ENCODE measurements at regions of chr5 and their contacts with region 1.

Region 1: DNA sequence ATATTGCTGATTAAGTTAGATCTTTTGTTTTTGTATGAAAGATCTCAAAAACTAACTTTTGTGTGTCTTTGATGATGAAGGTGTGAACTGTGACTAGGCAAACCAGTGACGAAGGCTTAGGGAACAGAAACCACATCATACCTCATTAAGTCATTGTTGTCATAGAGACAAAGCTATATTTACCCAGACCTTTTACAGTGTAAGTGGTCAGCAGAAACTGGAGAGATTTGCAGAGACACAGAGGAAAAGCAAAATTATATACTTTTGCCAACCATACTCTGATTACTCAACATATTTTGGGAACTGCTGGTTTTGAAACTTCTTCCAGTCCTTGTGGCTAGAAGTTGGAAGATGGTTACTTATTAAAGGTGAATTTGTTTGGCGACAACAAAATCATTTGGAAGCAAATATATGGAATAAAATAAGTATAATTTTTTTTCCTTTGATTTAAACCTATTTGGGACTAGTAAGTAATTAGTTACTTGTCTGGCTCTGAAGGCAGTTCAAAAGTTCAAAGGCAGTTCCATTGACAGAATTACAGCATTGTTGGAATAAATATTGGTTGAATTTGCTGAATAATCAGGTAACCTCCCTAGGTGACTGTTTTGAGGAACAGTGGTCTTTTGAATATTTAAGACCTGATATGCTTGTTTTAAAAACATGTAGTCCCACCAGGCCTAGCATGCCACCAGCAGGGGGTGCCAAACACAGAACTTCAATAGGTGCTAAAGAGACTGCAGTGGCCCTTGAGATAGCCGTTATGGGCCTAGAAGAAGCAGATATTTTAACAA is 103.8 kb downstream of the RPS23 start:
- DNase-seq: peak in 1 of 2 donors; percentile 25
- ATAC-seq: peak in 1 of 2 donors; percentile 66
- H3K4me3 ChIP-seq: no peak overlapping the region
- H3K27ac ChIP-seq: no peak overlapping the region
- H3K4me1 ChIP-seq: no peaks in the 10 kb centered on the region
- H3K27me3 ChIP-seq: no peaks in the 10 kb centered on the region
- CTCF ChIP-seq: peak; percentile 10 to 54 (median 32)
- POLR2A ChIP-seq: no peak

Region 2: DNA sequence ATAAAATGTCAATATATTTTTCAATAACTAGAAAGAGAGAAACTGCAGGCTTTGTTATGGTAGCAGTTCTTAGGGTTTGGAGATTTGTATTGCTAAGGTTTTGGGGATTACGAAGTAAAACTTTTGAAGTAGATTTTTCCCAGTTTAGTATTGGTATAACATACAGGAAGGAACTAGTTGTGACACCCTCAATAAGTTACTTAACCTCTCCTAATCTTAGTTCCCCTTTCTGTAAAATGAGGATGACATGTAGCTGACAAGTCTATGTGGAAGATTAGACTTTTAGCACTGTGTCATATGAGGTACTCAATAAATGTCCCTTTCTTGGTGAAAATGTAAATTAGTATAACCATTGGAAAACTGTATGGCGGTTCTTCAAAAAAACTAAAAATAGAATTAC is 275.9 kb before region 1 on chr5:
- in situ Hi-C with region 1: no loop called
- intact Hi-C with region 1: no loop called
- DNase-seq: no peak
- ATAC-seq: no peak
- H3K4me3 ChIP-seq: no peak overlapping the region
- H3K27ac ChIP-seq: no peak overlapping the region
- H3K4me1 ChIP-seq: no peaks in the 10 kb centered on the region
- H3K27me3 ChIP-seq: no peaks in the 10 kb centered on the region
- CTCF ChIP-seq: no peak
- POLR2A ChIP-seq: no peak

Region 3: GRCh38 chr5:82107267-82107666 is 67.1 kb before region 1 on chr5:
- in situ Hi-C with region 1: loop called in 1 of 4 experiments (anchors 10 kb)
- intact Hi-C with region 1: no loop called
- DNase-seq: no peak
- ATAC-seq: peak; percentile 74 to 79
- H3K4me3 ChIP-seq: no peak overlapping the region
- H3K27ac ChIP-seq: no peak overlapping the region
- H3K4me1 ChIP-seq: peaks cover 7 to 18% of the 10 kb centered on the region in 2 donors
- H3K27me3 ChIP-seq: no peaks in the 10 kb centered on the region
- CTCF ChIP-seq: peak; percentile 38 to 56 (median 54)
- POLR2A ChIP-seq: no peak

Region 4: GRCh38 chr5:82225525-82226172 is 51.3 kb after region 1 on chr5:
- in situ Hi-C with region 1: no loop called
- intact Hi-C with region 1: loop called (anchors 1 kb)
- DNase-seq: peak; percentile 33 to 50
- ATAC-seq: peak; percentile 67 to 95
- H3K4me3 ChIP-seq: no peak overlapping the region
- H3K27ac ChIP-seq: no peak overlapping the region
- H3K4me1 ChIP-seq: no peaks in the 10 kb centered on the region
- H3K27me3 ChIP-seq: no peaks in the 10 kb centered on the region
- CTCF ChIP-seq: peak; percentile 70 to 86 (median 82)
- POLR2A ChIP-seq: no peak

Region 5: GRCh38 chr5:82278095-82278918 is 104.0 kb after region 1 on chr5 and contains the start of gene RPS23:
- in situ Hi-C with region 1: no loop called
- intact Hi-C with region 1: no loop called
- DNase-seq: peak; percentile 81 to 89
- ATAC-seq: peak; percentile 98
- H3K4me3 ChIP-seq: peak within 1 kb of the TSS; percentile 67 to 100 (median 87)
- H3K27ac ChIP-seq: peak within 1 kb of the TSS; percentile 79 to 90 (median 84)
- H3K4me1 ChIP-seq: peaks cover 9 to 40% of the 10 kb centered on the region in 2 donors
- H3K27me3 ChIP-seq: no peaks in the 10 kb centered on the region
- CTCF ChIP-seq: peak in 1 of 5 experiments; percentile 24
- POLR2A ChIP-seq: peak; percentile 70 to 77
- total RNA-seq, gene RPS23: 3,129 to 4,184 (median 3,721) TPM

Region 6: DNA sequence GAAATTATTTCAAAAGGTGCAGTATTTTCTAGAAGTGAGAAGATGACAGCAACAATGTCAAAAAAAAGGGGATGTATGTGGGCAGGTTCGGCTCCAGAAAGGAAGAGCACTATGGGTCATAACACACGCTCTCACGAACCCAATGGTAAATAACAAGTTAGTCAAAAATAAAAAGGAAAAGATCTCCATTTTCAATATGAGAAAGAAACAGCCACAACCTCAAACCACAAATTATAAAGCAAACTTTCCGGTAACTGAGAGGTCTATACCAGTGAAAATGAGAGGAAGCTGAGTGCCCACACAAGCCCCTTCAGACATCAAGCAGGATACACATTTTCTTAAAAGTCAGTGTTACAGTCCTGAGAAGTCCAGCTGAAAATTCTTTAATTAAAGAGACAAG is 502.3 kb after region 1 on chr5:
- in situ Hi-C with region 1: no loop called
- intact Hi-C with region 1: no loop called
- DNase-seq: no peak
- ATAC-seq: no peak
- H3K4me3 ChIP-seq: no peak overlapping the region
- H3K27ac ChIP-seq: no peak overlapping the region
- H3K4me1 ChIP-seq: no peaks in the 10 kb centered on the region
- H3K27me3 ChIP-seq: no peaks in the 10 kb centered on the region
- CTCF ChIP-seq: no peak
- POLR2A ChIP-seq: no peak